BJ (cell line): ENCODE measurements at regions of chr19 and their contacts with region 1.

Region 1: DNA sequence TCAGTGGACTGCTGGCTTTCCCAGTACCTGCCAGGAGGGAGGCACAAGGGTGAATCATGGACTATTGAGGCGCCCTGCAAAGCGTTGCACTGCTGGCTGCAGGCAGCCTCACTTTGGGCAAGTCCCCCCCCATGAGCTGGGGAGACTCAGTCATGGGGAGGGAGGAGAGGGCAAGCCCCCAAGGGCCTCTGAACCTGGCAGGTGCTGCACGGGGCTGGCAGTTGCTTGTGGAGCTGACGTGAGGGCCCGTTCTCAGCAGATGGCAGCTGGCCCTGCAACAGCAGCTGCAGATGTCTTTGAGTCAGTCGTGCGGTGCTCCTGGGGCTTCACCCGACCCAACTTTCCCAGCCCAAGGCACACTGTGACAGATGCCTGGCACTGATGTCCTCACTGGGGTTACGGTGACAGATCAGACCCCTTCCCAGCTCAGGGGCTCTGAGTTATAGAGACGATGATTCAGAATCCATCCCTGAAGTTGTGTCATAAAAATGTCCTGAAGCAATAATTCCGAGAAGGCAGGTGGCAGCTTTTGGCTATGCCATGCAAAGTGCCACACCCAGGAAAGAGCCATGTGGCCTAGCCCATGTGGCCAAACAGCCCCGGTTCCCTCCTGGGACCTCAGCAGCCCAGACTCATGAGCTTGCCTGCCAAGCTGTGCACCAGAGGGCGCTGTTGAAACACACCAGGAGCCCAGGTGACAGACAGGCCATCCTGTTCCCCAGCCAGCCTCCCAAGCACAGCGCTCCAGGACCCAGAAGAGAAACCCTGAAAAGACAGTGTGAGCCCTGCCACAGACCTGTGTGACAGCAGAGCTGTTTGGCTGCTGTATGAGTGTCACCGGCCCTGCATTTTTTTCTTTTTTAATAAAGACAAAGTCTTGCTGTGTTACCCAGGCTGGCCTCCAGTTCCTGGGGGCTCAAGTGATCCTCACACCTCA is 53.6 kb upstream of the LDLR start:
- DNase-seq: peak; percentile 19
- H3K4me3 ChIP-seq: no peak overlapping the region
- H3K27me3 ChIP-seq: no peaks in the 10 kb centered on the region
- CTCF ChIP-seq: peak; percentile 96

Region 2: DNA sequence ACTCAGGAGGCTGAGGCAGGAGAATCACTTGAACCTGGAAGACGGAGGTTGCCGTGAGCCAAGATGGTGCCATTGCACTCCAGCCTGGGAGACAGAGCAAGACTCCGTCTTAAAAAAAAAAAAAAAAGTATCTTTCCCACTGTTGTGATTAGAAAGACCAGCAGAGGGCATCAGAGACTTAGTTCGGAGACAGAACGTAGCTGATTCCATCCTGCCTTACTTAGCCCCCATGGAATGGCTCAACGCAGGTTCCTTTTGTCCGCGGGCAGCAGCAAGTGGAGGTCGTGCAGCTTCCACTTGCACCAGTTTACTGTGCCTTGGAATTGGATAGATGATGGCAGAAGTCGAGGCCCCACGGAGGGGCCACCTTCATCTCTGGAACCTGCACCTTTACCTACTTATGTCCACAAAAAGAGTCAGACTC is 99.0 kb before region 1 on chr19:
- CTCF ChIA-PET with region 1: interaction called, 14 read pairs
- POLR2A ChIA-PET with region 1: no interaction called
- DNase-seq: peak; percentile 42
- H3K4me3 ChIP-seq: no peak overlapping the region
- H3K27me3 ChIP-seq: no peaks in the 10 kb centered on the region
- CTCF ChIP-seq: peak; percentile 65

Region 3: GRCh38 chr19:10979951-10980381 is 55.7 kb before region 1 on chr19:
- CTCF ChIA-PET with region 1: no interaction called
- POLR2A ChIA-PET with region 1: no interaction called
- DNase-seq: no peak
- H3K4me3 ChIP-seq: no peak overlapping the region
- H3K27me3 ChIP-seq: no peaks in the 10 kb centered on the region
- CTCF ChIP-seq: no peak

Region 4: GRCh38 chr19:11025445-11025844 is 10.3 kb before region 1 on chr19:
- CTCF ChIA-PET with region 1: interaction called, 27 read pairs
- POLR2A ChIA-PET with region 1: no interaction called
- DNase-seq: no peak
- H3K4me3 ChIP-seq: no peak overlapping the region
- H3K27me3 ChIP-seq: no peaks in the 10 kb centered on the region
- CTCF ChIP-seq: no peak

Region 5: DNA sequence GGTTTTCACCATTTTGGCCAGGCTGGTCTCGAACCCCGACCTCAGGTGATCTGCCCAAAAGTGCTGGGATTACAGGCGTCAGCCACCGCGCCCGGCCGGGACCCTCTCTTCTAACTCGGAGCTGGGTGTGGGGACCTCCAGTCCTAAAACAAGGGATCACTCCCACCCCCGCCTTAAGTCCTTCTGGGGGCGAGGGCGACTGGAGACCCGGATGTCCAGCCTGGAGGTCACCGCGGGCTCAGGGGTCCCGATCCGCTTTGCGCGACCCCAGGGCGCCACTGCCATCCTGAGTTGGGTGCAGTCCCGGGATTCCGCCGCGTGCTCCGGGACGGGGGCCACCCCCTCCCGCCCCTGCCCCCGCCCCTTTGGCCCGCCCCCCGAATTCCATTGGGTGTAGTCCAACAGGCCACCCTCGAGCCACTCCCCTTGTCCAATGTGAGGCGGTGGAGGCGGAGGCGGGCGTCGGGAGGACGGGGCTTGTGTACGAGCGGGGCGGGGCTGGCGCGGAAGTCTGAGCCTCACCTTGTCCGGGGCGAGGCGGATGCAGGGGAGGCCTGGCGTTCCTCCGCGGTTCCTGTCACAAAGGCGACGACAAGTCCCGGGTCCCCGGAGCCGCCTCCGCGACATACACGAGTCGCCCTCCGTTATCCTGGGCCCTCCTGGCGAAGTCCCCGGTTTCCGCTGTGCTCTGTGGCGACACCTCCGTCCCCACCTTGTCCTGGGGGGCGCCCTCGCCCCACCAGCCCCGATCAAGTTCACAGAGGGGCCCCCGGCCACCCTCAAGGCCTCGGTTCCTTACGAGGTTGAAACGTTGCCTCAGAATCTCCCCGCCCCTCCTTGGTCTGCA is 54.6 kb after region 1 on chr19:
- CTCF ChIA-PET with region 1: interaction called, 18 read pairs
- POLR2A ChIA-PET with region 1: no interaction called
- DNase-seq: peak; percentile 68
- H3K4me3 ChIP-seq: peak overlapping the region; percentile 63
- H3K27me3 ChIP-seq: no peaks in the 10 kb centered on the region
- CTCF ChIP-seq: 0 out of 2 replicates have a peak, but pooled peaks have one; percentile 14

Region 6: DNA sequence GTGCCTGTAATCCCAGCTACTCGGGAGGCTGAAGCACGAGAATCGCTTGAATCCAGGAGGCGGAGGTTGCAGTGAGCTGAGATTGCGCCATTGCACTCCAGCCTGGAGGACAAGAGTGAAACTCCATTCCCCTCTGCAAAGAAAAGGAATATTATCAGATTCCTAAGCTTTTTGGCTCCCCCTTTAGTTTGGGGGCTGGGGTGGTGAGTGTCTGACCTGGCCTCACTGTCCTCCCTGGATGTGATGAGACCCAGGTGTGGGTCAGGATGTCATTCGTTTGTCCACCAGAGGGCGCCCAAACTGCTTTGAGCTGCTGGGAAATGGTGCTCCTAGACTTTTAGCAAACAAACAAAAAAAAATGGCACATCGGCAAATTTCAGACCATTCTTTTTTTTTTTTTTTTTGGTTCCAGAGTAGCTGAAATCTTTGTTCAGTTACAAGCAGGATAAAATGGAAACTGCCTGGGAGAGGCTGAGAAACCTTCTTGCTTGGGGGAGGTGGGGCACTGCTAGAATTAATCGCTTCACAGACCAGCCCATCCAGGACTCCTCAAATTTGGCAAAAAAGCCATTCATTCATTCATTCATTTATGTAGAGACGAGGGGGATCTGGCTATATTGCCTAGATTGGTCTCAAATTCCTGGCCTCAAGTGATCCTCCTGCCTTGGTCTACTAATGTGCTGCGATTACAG is 90.4 kb after region 1 on chr19:
- CTCF ChIA-PET with region 1: interaction called, 27 read pairs
- POLR2A ChIA-PET with region 1: no interaction called
- DNase-seq: no peak
- H3K4me3 ChIP-seq: no peak overlapping the region
- H3K27me3 ChIP-seq: no peaks in the 10 kb centered on the region
- CTCF ChIP-seq: peak; percentile 82